Activated B cell treated with CpG ODN at 0.5 μM for 24 hours (primary cell): ENCODE measurements at regions of chr16 and their contacts with region 1.

Region 1: GRCh38 chr16:85986931-85987749 is 88.2 kb downstream of the IRF8 start:
- DNase-seq: peak; percentile 36
- ATAC-seq: no peak
- H3K4me3 Mint-ChIP-seq: peak overlapping the region; percentile 5
- H3K27ac Mint-ChIP-seq: peak overlapping the region; percentile 47
- H3K4me1 Mint-ChIP-seq: peaks cover 98% of the 10 kb centered on the region
- H3K27me3 Mint-ChIP-seq: no peaks in the 10 kb centered on the region
- CTCF ChIP-seq: no peak

Region 2: DNA sequence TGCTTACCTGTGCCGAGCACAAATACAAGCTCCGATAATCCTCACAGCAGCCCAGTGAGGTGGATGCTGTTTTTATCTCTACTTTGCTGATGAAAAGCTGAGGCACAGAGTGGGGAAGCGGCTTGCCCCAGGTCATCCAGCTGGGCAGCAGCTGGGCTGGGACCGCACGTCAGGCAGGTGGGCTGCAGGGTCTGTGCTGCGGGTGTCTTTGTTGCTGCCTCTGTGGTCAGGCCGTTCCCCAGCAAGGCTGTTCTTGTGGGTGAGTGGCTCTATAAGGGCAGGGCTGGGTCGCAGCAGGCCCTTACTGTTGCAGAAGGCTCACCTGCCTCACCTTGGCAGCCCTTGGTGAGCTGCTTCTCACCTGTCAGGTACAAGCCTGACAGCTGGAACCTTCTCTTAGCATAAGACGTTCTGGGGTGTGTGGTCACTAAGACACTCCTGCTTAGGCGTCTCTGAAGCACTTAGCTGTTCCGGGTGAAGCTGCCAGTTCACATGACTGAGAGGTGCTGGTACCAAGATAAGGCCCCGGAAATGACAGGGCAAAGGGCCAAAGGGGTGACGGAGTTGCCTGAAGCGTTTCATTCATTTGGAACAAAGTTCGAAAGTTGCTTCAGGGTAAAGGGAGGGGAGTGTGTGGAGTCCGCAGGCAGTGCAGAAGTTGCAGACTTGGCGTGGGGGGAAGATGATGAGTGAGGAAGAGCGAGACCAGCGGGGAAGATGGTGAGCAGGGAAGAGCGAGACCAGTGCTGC is 70.8 kb before region 1 on chr16:
- CTCF ChIA-PET with region 1: interaction called, 11 read pairs
- POLR2A ChIA-PET with region 1: interaction called, 11 read pairs
- intact Hi-C with region 1: loop called (anchors 5 kb)
- DNase-seq: no peak
- ATAC-seq: no peak
- H3K4me3 Mint-ChIP-seq: peak overlapping the region; percentile 16
- H3K27ac Mint-ChIP-seq: peak overlapping the region; percentile 97
- H3K4me1 Mint-ChIP-seq: peaks cover 86% of the 10 kb centered on the region
- H3K27me3 Mint-ChIP-seq: no peaks in the 10 kb centered on the region
- CTCF ChIP-seq: no peak

Region 3: DNA sequence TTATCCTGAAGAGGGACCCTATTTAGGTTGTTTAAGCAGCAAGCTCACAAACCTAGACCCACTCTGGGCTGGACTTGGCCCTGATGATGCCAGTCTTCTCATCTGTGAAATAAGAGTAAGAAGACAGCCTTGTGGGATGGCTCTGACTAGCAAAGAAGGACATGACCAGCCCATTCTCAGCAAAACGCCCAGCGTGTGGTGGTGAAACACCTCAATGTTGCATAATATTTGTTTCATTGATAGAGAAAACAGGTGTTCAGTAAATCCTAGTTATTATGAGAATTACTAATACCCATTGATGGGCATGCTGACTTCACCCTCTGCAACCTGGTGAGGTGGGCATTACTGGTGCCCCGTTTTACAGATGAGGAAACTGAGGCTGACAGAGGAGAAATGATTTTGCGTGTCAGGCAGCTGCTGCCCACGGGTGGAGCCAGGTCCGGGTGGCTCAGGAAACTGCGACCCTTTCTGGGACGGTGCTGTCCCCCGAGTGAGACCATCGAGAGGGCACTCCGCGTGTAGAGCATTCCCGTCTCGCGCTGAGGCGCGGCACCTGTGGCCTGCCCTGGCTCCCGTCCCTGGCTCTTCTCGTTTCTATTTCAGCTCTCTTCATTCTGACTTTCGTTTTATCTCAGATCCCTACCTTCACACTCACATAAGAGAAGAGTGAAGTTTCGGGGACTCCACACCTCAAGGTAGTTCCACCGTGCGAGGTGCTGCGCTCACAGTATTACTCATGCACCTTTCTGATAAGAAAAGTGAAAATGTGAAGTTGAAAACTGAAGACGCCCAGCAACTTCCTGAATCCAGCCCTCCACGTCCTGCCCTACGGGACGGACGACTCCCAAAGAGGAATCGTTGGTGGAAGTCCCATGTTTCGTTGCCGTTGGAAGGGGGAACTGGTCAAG is 39.7 kb before region 1 on chr16:
- CTCF ChIA-PET with region 1: interaction called, 7 read pairs
- POLR2A ChIA-PET with region 1: interaction called, 61 read pairs
- intact Hi-C with region 1: loop called (anchors 1 kb)
- DNase-seq: peak; percentile 51
- ATAC-seq: peak; percentile 79
- H3K4me3 Mint-ChIP-seq: peak overlapping the region; percentile 84
- H3K27ac Mint-ChIP-seq: peak overlapping the region; percentile 93
- H3K4me1 Mint-ChIP-seq: peaks cover 91% of the 10 kb centered on the region
- H3K27me3 Mint-ChIP-seq: no peaks in the 10 kb centered on the region
- CTCF ChIP-seq: no peak

Region 4: DNA sequence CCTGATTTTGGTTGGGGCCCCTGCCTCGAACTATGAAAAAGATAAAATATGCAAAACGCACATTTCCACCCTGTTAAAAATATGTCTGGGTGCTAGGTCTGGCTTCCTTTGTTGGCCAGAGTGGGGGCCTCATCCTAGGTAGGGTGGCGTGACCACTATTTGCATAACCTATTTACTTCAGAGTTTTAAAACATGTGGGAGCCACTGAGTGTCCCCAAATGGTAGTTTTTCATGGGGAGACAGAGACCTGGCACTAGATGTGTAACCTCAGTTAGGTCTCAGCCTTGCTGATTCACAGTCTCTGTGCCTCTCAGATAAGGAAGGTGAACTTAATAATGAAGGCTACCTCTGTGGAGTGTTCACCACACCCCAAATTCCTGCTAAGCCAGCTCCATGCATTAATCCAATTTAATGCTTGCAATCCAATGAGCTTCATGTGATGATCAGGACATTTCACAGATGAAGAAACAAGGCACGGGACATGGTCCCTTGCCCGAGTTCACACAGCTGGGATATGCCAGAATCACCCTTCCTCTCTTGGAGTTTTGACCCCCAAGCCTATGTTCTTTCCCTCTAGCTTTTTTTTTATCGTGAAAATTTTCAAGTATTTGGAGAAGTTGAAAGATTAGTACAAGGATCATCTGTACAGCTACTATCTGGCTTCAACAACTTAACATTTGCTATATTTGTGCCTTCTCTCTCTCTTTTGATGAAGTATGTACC is 15.2 kb after region 1 on chr16:
- CTCF ChIA-PET with region 1: interaction called, 4 read pairs
- POLR2A ChIA-PET with region 1: interaction called, 10 read pairs
- intact Hi-C with region 1: no loop called
- DNase-seq: peak; percentile 5
- ATAC-seq: peak; percentile 60
- H3K4me3 Mint-ChIP-seq: no peak overlapping the region
- H3K27ac Mint-ChIP-seq: peak overlapping the region; percentile 77
- H3K4me1 Mint-ChIP-seq: peaks cover 61% of the 10 kb centered on the region
- H3K27me3 Mint-ChIP-seq: no peaks in the 10 kb centered on the region
- CTCF ChIP-seq: no peak